Activated naive CD4-positive, alpha-beta T cell treated with anti-CD3 and anti-CD28 coated beads for 36 hours (primary cell): ENCODE measurements at regions of chr5 and their contacts with region 1.

Region 1: DNA sequence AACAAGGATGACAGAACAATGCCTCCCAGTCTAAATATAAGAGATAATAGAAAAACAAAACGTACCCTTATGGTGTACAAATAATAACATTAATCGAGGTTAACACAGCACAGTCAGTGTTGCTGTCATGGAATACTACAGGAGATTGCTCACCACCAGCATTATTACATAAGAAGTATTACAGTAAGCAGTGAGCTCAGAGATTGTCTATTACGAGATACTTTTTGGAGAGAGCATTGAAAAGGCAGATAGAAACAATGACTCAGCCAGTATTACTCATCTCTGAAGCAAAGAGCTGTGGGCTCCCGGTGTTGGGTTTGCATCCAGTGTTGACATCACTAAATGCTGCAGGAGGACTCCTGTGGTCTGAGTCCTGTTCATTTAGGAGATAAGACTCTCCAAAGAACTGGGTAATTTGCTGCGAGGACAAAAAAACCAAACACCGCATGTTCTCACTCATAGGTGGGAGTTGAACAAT is 191.9 kb upstream of the SEMA6A start:
- DNase-seq: peak; percentile 9
- H3K4me3 Mint-ChIP-seq: no peak overlapping the region
- H3K27ac Mint-ChIP-seq: no peak overlapping the region
- H3K4me1 Mint-ChIP-seq: no peaks in the 10 kb centered on the region
- H3K27me3 Mint-ChIP-seq: peaks cover 4% of the 10 kb centered on the region

Region 2: DNA sequence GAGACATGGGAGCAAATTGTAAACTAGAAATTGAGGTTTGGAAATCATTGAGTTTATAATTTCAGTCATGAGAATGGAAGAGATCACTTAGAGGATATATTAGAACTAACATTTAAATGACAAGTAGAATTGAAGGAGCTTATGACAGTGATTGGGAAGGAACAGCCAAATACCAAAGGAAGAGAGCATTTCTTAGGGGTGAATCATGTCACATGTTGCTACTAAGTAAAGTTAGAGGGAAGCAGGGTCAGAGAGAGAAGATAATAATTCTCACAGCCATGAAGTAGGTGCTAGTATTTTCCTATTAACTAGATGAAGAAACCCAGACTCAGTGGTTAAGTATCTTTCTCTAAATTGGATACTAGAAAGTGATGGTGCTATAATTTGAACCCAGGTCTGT is 622.4 kb before region 1 on chr5:
- CTCF ChIA-PET with region 1: no interaction called
- intact Hi-C with region 1: loop called (anchors 10 kb)
- DNase-seq: no peak
- H3K4me3 Mint-ChIP-seq: no peak overlapping the region
- H3K27ac Mint-ChIP-seq: no peak overlapping the region
- H3K4me1 Mint-ChIP-seq: peaks cover 3% of the 10 kb centered on the region
- H3K27me3 Mint-ChIP-seq: no peaks in the 10 kb centered on the region

Region 3: DNA sequence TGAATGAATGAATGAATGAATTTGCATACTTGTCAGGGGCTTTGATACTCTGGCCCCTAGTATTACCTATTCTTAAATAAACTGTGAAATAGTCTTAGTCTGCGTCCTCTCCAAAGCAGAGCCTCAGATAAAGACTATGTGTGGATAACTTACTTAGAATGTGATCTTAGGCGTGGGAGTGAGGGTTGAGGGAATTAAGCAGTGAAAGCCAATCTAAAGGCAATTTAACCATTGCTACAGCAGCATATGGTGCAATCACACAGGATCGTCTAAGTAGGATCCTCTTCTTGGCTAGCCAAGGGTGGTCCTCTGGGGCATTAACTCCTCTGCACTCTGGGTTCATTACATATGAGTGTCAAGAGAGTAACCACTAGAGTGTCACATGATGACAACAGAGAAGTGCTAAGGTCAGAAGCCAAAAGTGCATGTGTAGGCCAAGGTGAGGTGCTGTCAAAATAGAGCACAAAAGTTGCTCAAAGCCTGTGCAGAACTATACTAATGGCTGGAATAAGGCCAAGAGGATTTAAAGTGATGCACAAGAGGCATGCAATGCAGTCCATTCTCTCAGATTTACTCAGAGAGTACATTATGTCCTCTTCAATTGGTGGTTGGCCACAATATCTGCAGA is 82.6 kb after region 1 on chr5:
- CTCF ChIA-PET with region 1: no interaction called
- intact Hi-C with region 1: no loop called
- DNase-seq: no peak
- H3K4me3 Mint-ChIP-seq: no peak overlapping the region
- H3K27ac Mint-ChIP-seq: no peak overlapping the region
- H3K4me1 Mint-ChIP-seq: no peaks in the 10 kb centered on the region
- H3K27me3 Mint-ChIP-seq: no peaks in the 10 kb centered on the region